Heart right ventricle (tissue), 16 donors: ENCODE measurements at regions of chr6 and their contacts with region 1.

Region 1: DNA sequence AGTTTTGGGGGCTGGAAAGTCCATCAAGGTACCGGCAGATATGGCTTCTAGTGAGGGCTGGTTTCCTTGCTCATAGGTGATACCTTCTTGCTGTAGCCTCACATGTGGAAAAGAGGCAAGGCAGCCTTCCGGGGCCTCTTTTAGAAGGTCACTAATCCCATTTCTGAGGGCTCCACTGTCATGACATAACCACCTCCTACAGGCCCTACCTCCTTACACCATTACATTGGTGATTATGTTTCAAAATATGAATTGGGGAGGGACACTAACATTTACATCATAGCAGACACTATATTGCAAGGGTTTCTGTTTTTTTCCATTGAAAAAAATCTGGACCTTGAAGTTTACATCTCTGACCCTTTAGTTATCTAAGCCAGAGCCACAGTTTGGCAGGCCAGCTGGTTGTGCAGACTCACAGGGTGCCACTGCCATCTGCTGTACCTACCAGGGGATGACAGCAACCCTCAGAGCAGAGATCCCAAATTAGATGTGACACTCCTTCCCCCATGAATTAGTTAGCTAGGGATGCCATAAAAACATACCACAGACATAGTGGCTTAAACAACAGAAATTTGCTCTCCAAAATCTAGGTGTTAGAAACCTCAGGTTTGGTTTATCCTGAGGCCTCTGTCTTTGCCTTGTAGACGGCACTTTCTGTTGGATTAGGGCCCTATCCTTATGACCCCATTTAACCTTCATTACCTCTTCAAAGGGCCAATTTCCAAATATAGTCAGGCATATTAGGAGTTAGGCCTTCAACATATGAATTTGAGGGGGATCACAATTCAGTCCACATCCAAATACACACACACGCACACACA is 166.4 kb upstream of the RNF217 start:
- DNase-seq: peak; percentile 8 to 19
- ATAC-seq: peak; percentile 52 to 90 (median 84)
- H3K4me3 ChIP-seq: no peak overlapping the region
- H3K27ac ChIP-seq: no peak overlapping the region
- H3K4me1 ChIP-seq: no peaks in the 10 kb centered on the region
- H3K27me3 ChIP-seq: peaks cover 0 to 4% (median 0%) of the 10 kb centered on the region in 7 donors
- CTCF ChIP-seq: peak in 8 of 9 donors; percentile 22 to 67 (median 58)

Region 2: GRCh38 chr6:123402052-123402451 is 1393.8 kb before region 1 on chr6:
- intact Hi-C with region 1: loop called in 1 of 10 experiments (anchors 10 kb)
- DNase-seq: no peak
- ATAC-seq: no peak
- H3K4me3 ChIP-seq: no peak overlapping the region
- H3K27ac ChIP-seq: no peak overlapping the region
- H3K4me1 ChIP-seq: peaks cover 0 to 4% (median 0%) of the 10 kb centered on the region in 9 donors
- H3K27me3 ChIP-seq: no peaks in the 10 kb centered on the region
- CTCF ChIP-seq: no peak

Region 3: GRCh38 chr6:123777563-123777962 is 1018.3 kb before region 1 on chr6:
- intact Hi-C with region 1: loop called in 1 of 10 experiments (anchors 10 kb)
- DNase-seq: no peak
- ATAC-seq: no peak
- H3K4me3 ChIP-seq: no peak overlapping the region
- H3K27ac ChIP-seq: no peak overlapping the region
- H3K4me1 ChIP-seq: no peaks in the 10 kb centered on the region
- H3K27me3 ChIP-seq: peaks cover 0 to 7% (median 0%) of the 10 kb centered on the region in 7 donors
- CTCF ChIP-seq: peak in 3 of 9 donors; percentile 14 to 25 (median 16)